ENCODE measurements at regions of chr10 and their contacts with region 1.

Region 1: GRCh38 chr10:49606981-49607535 is 3.1 kb upstream of the SLC18A3 start:
- DNase-seq: peak; percentile 51
- ATAC-seq: peak; percentile 72
- H3K4me3 Mint-ChIP-seq: no peak overlapping the region
- H3K27ac Mint-ChIP-seq: no peak overlapping the region
- H3K4me1 Mint-ChIP-seq: peaks cover 6% of the 10 kb centered on the region
- H3K27me3 Mint-ChIP-seq: peaks cover 67% of the 10 kb centered on the region
- CTCF ChIP-seq: no peak

Region 2: GRCh38 chr10:48551861-48552591 is 1055.0 kb before region 1 on chr10:
- CTCF ChIA-PET with region 1: no interaction called
- POLR2A ChIA-PET with region 1: no interaction called
- intact Hi-C with region 1: no loop called
- DNase-seq: peak; percentile 27
- ATAC-seq: peak; percentile 89
- H3K4me3 Mint-ChIP-seq: no peak overlapping the region
- H3K27ac Mint-ChIP-seq: no peak overlapping the region
- H3K4me1 Mint-ChIP-seq: peaks cover 11% of the 10 kb centered on the region
- H3K27me3 Mint-ChIP-seq: peaks cover 5% of the 10 kb centered on the region
- CTCF ChIP-seq: no peak

Region 3: DNA sequence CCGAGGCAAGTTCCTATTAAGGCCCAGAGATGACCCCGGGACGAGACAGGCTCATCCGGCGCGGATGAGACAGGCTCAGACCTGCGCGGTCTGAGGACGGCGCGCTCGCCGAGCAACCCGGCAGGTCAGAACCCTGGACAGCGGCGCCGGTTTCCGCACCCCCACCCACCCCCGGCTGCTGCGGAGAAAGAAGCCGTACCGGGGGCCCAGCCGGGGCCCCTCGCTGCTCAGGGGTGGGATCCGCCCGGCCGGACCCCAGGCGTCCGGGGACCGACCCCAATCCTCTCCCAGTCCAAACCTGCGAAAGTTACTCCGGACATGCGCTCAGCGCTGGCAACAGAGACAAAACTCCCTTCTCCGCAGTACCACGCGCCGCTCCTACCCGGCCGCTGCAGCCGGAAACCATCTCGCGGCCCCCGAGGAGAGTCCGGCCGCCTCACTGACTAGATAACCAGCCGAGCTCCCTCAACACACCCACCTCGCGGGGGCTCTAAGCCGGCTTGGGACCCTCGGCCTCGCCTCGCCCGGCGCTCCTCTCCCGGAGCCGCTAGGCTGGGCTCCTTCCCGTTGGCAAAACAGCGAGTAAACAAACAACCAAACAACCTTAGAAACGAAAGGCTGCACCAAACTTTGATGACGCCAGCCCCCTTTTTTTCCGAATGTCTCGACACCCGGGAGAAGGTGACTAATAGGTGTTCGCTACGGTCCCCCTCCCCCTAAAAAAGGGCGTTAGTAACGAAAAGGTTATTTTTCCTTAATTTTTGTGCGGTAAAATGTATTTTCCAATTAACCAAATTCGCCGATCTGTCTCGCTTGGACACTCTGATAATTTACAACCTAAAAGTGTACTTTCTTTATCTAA is 208.8 kb before region 1 on chr10:
- CTCF ChIA-PET with region 1: no interaction called
- POLR2A ChIA-PET with region 1: no interaction called
- intact Hi-C with region 1: loop called (anchors 5 kb)
- DNase-seq: peak; percentile 41
- ATAC-seq: peak; percentile 58
- H3K4me3 Mint-ChIP-seq: peak overlapping the region; percentile 41
- H3K27ac Mint-ChIP-seq: no peak overlapping the region
- H3K4me1 Mint-ChIP-seq: peaks cover 13% of the 10 kb centered on the region
- H3K27me3 Mint-ChIP-seq: peaks cover 52% of the 10 kb centered on the region
- CTCF ChIP-seq: no peak

Region 4: DNA sequence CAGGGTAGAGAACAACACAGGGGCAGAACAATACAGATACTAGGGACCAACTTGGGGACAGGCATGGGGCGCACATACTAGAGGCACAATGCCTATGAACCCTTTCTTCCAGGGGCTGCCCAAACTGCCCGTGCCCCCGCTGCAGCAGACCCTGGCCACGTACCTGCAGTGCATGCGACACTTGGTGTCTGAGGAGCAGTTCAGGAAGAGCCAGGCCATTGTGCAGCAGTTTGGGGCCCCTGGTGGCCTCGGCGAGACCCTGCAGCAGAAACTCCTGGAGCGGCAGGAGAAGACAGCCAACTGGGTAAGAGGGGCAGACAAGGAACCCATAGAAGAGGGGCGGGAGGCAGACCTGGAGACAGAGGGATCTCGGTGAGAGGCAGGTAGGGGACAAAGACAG is 12.6 kb after region 1 on chr10:
- CTCF ChIA-PET with region 1: no interaction called
- POLR2A ChIA-PET with region 1: no interaction called
- intact Hi-C with region 1: no loop called
- DNase-seq: no peak
- ATAC-seq: no peak
- H3K4me3 Mint-ChIP-seq: no peak overlapping the region
- H3K27ac Mint-ChIP-seq: no peak overlapping the region
- H3K4me1 Mint-ChIP-seq: peaks cover 2% of the 10 kb centered on the region
- H3K27me3 Mint-ChIP-seq: peaks cover 53% of the 10 kb centered on the region
- CTCF ChIP-seq: no peak

Region 5: GRCh38 chr10:49761789-49762565 is 154.9 kb after region 1 on chr10 and contains the start of gene OGDHL:
- CTCF ChIA-PET with region 1: no interaction called
- POLR2A ChIA-PET with region 1: no interaction called
- intact Hi-C with region 1: loop called (anchors 5 kb)
- DNase-seq: no peak
- ATAC-seq: peak; percentile 66
- H3K4me3 Mint-ChIP-seq: peak within 1 kb of the TSS; percentile 49
- H3K27ac Mint-ChIP-seq: no peak within 1 kb of the TSS
- H3K4me1 Mint-ChIP-seq: peaks cover 10% of the 10 kb centered on the region
- H3K27me3 Mint-ChIP-seq: peaks cover 43% of the 10 kb centered on the region
- CTCF ChIP-seq: no peak
- total RNA-seq, gene OGDHL: not detected in 2 replicates